Naive thymus-derived CD4-positive, alpha-beta T cell (primary cell): ENCODE measurements at regions of chr17 and their contacts with region 1.

Region 1: DNA sequence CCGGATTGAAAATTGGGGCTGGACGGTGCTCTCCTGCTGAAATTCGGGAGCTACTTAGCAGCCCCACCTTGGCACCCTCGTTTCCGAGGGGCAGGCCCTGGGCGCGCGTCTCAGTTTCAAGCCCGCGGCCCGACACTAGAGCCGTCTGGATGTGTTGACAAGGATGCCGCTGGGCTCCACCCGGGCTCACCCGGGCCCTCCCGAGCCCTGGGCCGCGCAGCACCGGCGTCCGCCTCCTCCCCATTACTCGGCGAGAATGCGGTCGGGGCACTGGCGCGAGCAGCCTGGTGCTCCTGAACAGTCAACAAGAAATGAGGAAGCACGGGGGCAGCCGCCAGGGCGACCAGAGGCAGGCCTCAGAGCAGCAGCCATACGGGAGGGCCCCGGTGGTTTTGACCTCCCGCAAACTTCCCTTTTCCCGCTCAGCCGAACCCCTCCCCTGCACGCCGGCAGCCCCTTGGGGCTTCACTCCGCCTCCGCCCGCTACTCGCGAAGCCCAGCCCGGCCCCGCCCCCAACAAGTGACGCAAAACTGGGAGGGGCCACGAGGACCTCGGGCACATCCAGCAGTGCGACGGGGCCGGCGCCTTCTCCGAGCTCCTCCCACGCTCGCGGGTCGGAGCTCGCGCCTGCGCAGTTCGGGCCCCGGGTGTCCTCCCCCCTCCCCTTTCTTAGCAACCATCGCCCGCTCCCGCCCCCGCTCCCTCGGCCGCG is 447 bp upstream of the SEC14L1 start:
- DNase-seq: peak; percentile 98 to 100 (median 99)
- ATAC-seq: peak; percentile 96
- H3K4me3 ChIP-seq: peak overlapping the region; percentile 74
- H3K4me3 Mint-ChIP-seq: peak overlapping the region; percentile 65 to 87 (median 80)
- H3K27ac ChIP-seq: peak overlapping the region; percentile 88
- H3K27ac Mint-ChIP-seq: peak overlapping the region; percentile 75 to 93 (median 90)
- H3K4me1 ChIP-seq: peaks cover 14 to 28% of the 10 kb centered on the region in 2 donors
- H3K4me1 Mint-ChIP-seq: peaks cover 32 to 73% (median 66%) of the 10 kb centered on the region in 7 donors
- H3K27me3 ChIP-seq: no peaks in the 10 kb centered on the region
- H3K27me3 Mint-ChIP-seq: no peaks in the 10 kb centered on the region

Region 2: DNA sequence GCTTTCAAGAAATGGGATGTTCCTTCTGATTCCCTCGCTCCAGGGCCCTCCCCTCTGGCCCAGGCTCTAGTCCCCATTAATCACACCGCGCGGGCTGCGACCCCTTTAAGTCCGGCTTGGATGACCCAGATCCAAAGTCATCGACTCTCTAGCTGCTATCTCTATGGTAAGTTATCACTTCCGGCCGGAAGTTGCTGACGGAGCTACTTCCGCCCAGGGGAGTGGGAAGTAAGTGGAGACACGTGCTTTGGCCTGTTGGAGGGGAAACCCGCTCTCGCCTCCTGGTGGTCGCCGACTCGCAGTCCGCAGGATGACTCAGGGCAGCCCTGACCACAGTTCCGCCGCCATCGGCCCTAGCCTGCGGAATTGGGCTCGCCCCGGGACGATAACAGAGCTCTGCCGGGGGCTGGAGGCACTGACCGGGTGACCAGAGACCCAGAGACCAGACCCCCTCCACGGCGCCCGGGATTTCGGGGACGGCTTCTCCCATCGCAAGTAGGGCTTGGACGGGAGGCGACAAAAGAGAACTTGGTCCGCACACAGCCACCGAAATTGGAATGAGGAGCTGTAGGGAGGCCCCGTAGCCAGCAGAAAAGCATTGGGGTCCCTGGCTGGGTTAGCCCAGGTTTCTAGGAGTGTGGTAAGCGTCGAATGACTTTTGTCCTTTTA is 51.7 kb before region 1 on chr17:
- CTCF ChIA-PET with region 1: interaction called, 9 read pairs
- POLR2A ChIA-PET with region 1: interaction called, 25 read pairs
- intact Hi-C with region 1: loop called (anchors 1 kb)
- DNase-seq: peak; percentile 61 to 86 (median 84)
- ATAC-seq: peak; percentile 96
- H3K4me3 ChIP-seq: peak overlapping the region; percentile 62
- H3K4me3 Mint-ChIP-seq: peak overlapping the region; percentile 89 to 100 (median 97)
- H3K27ac ChIP-seq: peak overlapping the region; percentile 89
- H3K27ac Mint-ChIP-seq: peak overlapping the region; percentile 91 to 100 (median 98)
- H3K4me1 ChIP-seq: peaks cover 23 to 31% of the 10 kb centered on the region in 2 donors
- H3K4me1 Mint-ChIP-seq: peaks cover 29 to 63% (median 51%) of the 10 kb centered on the region in 7 donors
- H3K27me3 ChIP-seq: no peaks in the 10 kb centered on the region
- H3K27me3 Mint-ChIP-seq: peaks cover 0 to 6% (median 0%) of the 10 kb centered on the region in 5 donors

Region 3: GRCh38 chr17:77096570-77097214 is 43.6 kb before region 1 on chr17:
- CTCF ChIA-PET with region 1: interaction called, 4 read pairs
- POLR2A ChIA-PET with region 1: interaction called, 13 read pairs
- intact Hi-C with region 1: loop called (anchors 1 to 2 kb)
- DNase-seq: peak in 5 of 9 donors; percentile 25 to 52 (median 33)
- ATAC-seq: peak; percentile 57
- H3K4me3 ChIP-seq: no peak overlapping the region
- H3K4me3 Mint-ChIP-seq: peak overlapping the region in 1 of 10 donors; percentile 16
- H3K27ac ChIP-seq: no peak overlapping the region
- H3K27ac Mint-ChIP-seq: peak overlapping the region; percentile 40 to 96 (median 85)
- H3K4me1 ChIP-seq: peaks cover 0 to 21% of the 10 kb centered on the region in 2 donors
- H3K4me1 Mint-ChIP-seq: peaks cover 21 to 54% (median 46%) of the 10 kb centered on the region in 7 donors
- H3K27me3 ChIP-seq: no peaks in the 10 kb centered on the region
- H3K27me3 Mint-ChIP-seq: no peaks in the 10 kb centered on the region

Region 4: DNA sequence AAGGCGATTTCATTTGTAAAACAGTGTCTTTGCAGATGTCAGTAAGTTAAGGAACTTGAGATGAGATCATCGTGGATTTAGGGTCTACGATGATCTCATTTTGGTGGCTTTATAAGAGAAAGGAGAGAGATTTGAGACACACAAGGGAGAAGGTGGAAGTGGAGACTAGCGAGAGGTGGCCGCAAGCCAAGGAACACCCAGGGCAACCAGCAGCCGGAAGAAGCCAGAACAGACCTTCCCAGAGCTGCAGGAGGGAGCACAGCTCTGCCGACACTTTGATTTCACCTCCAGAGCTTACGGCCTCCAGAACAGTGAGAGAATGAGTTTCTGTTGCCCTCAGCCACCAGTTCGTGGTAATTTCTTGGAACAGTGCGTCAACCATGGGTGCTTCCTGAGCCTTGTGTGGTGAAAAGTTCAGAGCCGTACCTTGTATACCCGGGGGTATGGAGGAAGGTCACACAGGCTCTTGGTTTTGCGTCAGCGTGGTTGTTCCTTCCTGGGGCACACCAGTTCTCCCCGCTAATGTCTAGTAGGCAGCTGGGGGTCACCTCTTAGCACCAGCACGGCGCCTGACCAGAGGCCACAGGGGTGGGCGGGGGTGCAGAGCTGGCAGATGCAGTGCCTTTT is 12.5 kb before region 1 on chr17:
- CTCF ChIA-PET with region 1: interaction called, 4 read pairs
- POLR2A ChIA-PET with region 1: interaction called, 67 read pairs
- intact Hi-C with region 1: loop called (anchors 1 kb)
- DNase-seq: peak; percentile 46 to 91 (median 85)
- ATAC-seq: peak; percentile 96
- H3K4me3 ChIP-seq: peak overlapping the region; percentile 34
- H3K4me3 Mint-ChIP-seq: peak overlapping the region; percentile 62 to 90 (median 79)
- H3K27ac ChIP-seq: peak overlapping the region; percentile 77
- H3K27ac Mint-ChIP-seq: peak overlapping the region; percentile 85 to 99 (median 95)
- H3K4me1 ChIP-seq: peaks cover 6 to 12% of the 10 kb centered on the region in 2 donors
- H3K4me1 Mint-ChIP-seq: peaks cover 12 to 53% (median 23%) of the 10 kb centered on the region in 7 donors
- H3K27me3 ChIP-seq: no peaks in the 10 kb centered on the region
- H3K27me3 Mint-ChIP-seq: no peaks in the 10 kb centered on the region

Region 5: GRCh38 chr17:77186141-77186604 is 45.9 kb after region 1 on chr17:
- CTCF ChIA-PET with region 1: no interaction called
- POLR2A ChIA-PET with region 1: interaction called, 15 read pairs
- intact Hi-C with region 1: loop called (anchors 5 kb)
- DNase-seq: peak in 1 of 9 donors; percentile 27
- ATAC-seq: peak; percentile 43
- H3K4me3 ChIP-seq: no peak overlapping the region
- H3K4me3 Mint-ChIP-seq: no peak overlapping the region
- H3K27ac ChIP-seq: no peak overlapping the region
- H3K27ac Mint-ChIP-seq: no peak overlapping the region
- H3K4me1 ChIP-seq: peaks cover 0 to 51% of the 10 kb centered on the region in 2 donors
- H3K4me1 Mint-ChIP-seq: peaks cover 28 to 58% (median 35%) of the 10 kb centered on the region in 7 donors
- H3K27me3 ChIP-seq: no peaks in the 10 kb centered on the region
- H3K27me3 Mint-ChIP-seq: no peaks in the 10 kb centered on the region

Region 6: DNA sequence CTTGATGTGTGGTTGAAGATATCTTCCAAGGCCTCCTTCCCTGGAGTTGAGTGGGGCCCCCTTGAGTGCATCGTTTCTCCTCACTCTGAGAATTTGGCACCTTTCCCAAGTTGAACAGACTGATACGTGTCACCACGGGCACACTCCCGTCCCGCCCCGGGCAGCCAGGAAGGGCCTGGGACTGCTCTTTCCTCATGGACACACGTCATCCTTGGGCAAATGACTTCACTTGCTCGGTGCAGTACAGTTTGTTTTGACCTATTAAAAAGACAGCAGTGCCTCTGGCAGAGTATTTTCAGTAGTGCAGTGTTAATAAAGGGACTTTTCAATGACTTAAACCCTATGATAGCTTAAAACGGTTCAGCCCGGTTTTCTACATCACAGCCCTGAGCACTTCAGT is 60.4 kb after region 1 on chr17:
- CTCF ChIA-PET with region 1: no interaction called
- POLR2A ChIA-PET with region 1: no interaction called
- intact Hi-C with region 1: no loop called
- DNase-seq: no peak
- ATAC-seq: no peak
- H3K4me3 ChIP-seq: no peak overlapping the region
- H3K4me3 Mint-ChIP-seq: no peak overlapping the region
- H3K27ac ChIP-seq: no peak overlapping the region
- H3K27ac Mint-ChIP-seq: peak overlapping the region in 1 of 9 donors; percentile 70
- H3K4me1 ChIP-seq: no peaks in the 10 kb centered on the region
- H3K4me1 Mint-ChIP-seq: peaks cover 0 to 2% (median 0%) of the 10 kb centered on the region in 7 donors
- H3K27me3 ChIP-seq: no peaks in the 10 kb centered on the region
- H3K27me3 Mint-ChIP-seq: no peaks in the 10 kb centered on the region